A549 (cell line): ENCODE measurements at regions of chr16 and their contacts with region 1.

Region 1: DNA sequence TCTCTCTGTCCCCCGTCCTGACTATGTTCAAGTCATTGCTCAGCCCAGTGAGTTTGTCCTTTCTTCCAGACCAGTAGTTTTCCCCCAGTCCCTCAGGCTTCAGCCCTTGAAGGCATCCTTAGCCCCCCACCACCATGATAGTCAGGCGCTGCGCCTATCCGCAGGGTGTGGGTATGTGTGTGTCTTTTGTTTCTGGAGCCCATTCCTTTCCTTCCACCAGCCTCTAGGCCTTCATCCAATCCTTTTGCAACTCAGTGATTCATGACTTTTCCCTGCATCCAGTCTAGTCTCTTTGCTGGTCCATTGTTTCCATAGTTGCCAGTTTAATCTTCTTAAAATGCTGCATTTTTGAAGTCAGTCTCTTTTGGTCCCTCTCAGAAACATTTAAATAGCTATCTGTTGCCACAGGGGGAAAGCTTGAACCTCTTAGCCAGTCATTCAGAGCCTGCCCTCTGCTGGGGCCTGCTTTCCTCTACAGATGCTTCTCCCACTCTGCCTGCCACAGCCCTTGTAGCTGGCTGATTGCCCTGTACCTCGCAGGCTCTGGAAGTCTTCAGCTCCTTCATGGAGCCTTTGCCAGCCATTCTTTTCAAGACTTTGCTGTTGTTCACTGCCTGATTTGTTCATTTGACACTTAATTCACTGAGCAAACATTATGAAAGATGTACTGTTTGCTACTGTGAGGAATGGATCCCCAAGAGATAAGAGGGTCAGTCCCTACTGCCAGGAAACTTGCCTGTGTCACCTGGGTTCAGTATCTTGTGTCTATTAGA is 55.9 kb upstream of the ADCY7 start:
- DNase-seq: peak; percentile 52 to 78
- ATAC-seq: peak; percentile 98
- H3K4me3 ChIP-seq: no peak overlapping the region
- H3K27ac ChIP-seq: peak overlapping the region in 1 of 2 experiments; percentile 5; a peak in 3 of 6 replicates
- H3K4me1 ChIP-seq: peaks cover 44% of the 10 kb centered on the region
- CTCF ChIP-seq: peak; percentile 62
- EP300 ChIP-seq: no peak
- POLR2A ChIP-seq: no peak
- RAD21 ChIP-seq: peak; percentile 76 to 77

Region 2: DNA sequence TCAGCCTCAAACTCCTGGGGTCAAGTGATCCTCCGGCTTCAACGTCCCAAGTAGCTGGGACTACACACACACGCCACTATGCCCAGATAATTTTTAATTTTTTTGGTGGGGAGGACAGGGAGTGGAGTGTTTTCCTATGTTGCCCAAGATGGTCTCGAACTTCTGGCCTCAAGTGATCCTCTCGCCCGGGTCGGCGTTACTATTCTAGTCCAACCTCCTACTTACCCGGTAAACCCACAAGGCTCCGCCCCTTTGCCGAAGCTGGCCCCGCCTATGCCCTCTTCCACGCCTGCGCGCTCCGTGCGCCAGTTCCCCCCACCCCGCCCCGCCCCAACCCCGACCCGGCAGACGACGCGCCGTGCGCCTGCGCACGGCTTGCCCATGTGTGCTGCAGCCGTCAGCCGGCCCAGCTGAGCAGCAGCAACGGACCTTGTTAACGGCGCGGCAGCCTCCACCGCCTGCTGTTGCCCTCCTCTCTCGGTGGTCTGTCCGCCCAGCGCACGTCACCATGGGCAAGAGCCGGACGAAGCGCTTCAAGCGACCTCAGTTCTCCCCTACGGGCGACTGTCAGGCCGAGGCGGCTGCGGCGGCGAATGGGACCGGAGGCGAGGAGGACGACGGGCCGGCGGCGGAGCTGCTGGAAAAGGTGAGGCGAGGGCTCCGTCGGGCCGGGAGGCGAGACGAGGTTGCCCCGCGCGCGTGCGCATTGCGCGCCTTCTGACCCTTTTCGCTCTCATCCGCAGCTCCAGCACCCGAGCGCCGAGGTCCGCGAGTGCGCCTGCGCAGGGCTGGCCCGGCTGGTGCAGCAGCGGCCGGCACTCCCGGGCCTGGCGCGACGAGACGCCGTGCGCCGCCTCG is 144.6 kb before region 1 on chr16 and contains the start of gene HEATR3:
- CTCF ChIA-PET with region 1: interaction called, 35 read pairs
- POLR2A ChIA-PET with region 1: interaction called, 8 read pairs
- DNase-seq: peak; percentile 93 to 95
- ATAC-seq: peak; percentile 89 to 97
- H3K4me3 ChIP-seq: peak within 1 kb of the TSS; percentile 90
- H3K27ac ChIP-seq: peak within 1 kb of the TSS; percentile 96 to 98
- H3K4me1 ChIP-seq: peaks cover 16% of the 10 kb centered on the region
- CTCF ChIP-seq: no peak
- EP300 ChIP-seq: no peak
- POLR2A ChIP-seq: peak; percentile 90
- RAD21 ChIP-seq: no peak
- polyA plus RNA-seq, gene HEATR3: 28.2 and 30.8 TPM in 2 replicates

Region 3: DNA sequence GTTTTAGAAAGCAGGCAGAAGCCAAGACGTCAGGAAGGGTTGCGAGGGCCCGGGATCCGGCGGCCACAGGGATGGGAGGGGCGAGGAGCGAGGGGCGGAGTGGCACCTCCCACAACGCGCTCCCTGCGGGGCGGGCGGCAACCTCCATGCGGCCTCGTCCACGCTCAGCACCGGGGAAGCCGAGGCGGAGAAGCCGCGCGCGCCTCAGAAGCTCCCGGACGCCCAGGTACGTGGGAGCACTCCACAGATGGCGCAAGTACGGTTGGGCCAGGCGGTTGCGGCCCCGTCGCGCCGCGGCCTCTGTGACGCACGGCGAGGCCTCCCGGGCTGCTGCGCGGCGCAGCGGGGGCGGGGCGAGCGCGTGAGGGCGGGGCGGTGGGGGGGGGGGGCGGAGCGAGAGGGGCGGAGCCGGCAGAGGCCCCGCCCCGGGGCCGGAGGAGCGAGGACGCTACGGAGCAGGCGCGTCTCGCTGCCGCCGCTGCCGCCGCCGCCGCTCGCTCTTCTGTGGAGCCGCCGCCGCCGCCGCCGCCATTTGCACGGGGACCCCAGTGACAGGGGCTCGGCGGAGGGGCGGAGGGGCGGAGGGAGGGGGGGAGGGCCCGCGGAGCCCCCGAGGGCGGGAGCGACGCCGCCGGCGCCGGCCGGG is 57.5 kb before region 1 on chr16 and contains the start of gene TENT4B:
- CTCF ChIA-PET with region 1: interaction called, 11 read pairs
- POLR2A ChIA-PET with region 1: interaction called, 5 read pairs
- DNase-seq: peak; percentile 85 to 89
- ATAC-seq: peak; percentile 83 to 94
- H3K4me3 ChIP-seq: peak within 1 kb of the TSS; percentile 71
- H3K27ac ChIP-seq: peak within 1 kb of the TSS; percentile 96
- H3K4me1 ChIP-seq: peaks cover 29% of the 10 kb centered on the region
- CTCF ChIP-seq: no peak
- EP300 ChIP-seq: no peak
- POLR2A ChIP-seq: peak; percentile 91
- RAD21 ChIP-seq: 0 out of 5 replicates have a peak, but pooled peaks of 1 of the 2 experiments have one; percentile 9
- polyA plus RNA-seq, gene TENT4B: 14.5 and 19.4 TPM in 2 replicates

Region 4: GRCh38 chr16:50245417-50246298 is 35.2 kb after region 1 on chr16:
- CTCF ChIA-PET with region 1: interaction called, 14 read pairs
- POLR2A ChIA-PET with region 1: interaction called, 4 read pairs
- DNase-seq: peak; percentile 81 to 83
- ATAC-seq: peak; percentile 80 to 85
- H3K4me3 ChIP-seq: peak overlapping the region; percentile 68
- H3K27ac ChIP-seq: peak overlapping the region; percentile 89 to 96
- H3K4me1 ChIP-seq: peaks cover 17% of the 10 kb centered on the region
- CTCF ChIP-seq: peak; percentile 73
- EP300 ChIP-seq: peak in 1 of 2 experiments; percentile 30; a peak in 1 of 5 replicates
- POLR2A ChIP-seq: peak; percentile 47
- RAD21 ChIP-seq: peak in 1 of 2 experiments; percentile 41; a peak in 2 of 5 replicates

Region 5: DNA sequence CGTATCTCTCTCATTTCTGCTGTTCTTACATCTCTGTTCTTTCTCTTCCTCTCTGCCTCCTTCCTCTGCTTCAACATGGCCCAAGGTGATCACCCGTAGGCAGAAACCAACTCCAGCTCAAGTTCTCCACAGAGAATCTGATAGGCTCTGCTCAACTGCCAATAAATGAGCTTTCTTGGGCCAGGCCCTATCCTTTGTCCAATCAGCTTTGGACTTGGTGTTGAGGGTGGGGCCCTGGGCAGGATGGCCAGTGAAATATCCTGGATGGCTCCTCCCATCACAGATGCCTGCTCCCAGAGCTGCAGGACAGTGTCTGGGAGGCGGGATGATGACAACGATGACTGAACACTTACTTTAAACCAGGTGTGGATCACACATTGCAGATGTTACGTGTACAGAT is 175.7 kb after region 1 on chr16:
- CTCF ChIA-PET with region 1: no interaction called
- POLR2A ChIA-PET with region 1: no interaction called
- DNase-seq: peak in 1 of 2 experiments; percentile 21
- ATAC-seq: peak in 1 of 2 experiments; percentile 69; a peak in 3 of 6 replicates
- H3K4me3 ChIP-seq: no peak overlapping the region
- H3K27ac ChIP-seq: no peak overlapping the region
- H3K4me1 ChIP-seq: no peaks in the 10 kb centered on the region
- CTCF ChIP-seq: no peak
- EP300 ChIP-seq: no peak
- POLR2A ChIP-seq: no peak
- RAD21 ChIP-seq: no peak